Heart left ventricle (tissue), 16 donors: ENCODE measurements at regions of chr11 and their contacts with region 1.

Region 1: GRCh38 chr11:5808500-5809121 is at the start of gene OR52N2:
- DNase-seq: peak in 4 of 5 donors; percentile 63 to 70 (median 66)
- ATAC-seq: peak in 3 of 4 donors; percentile 88 to 92 (median 90)
- H3K4me3 ChIP-seq: peak within 1 kb of the TSS; percentile 17 to 66 (median 54)
- H3K27ac ChIP-seq: no peak within 1 kb of the TSS
- H3K4me1 ChIP-seq: peaks cover 0 to 12% (median 0%) of the 10 kb centered on the region in 12 donors
- H3K27me3 ChIP-seq: peaks cover 0 to 2% (median 0%) of the 10 kb centered on the region in 9 donors
- CTCF ChIP-seq: peak; percentile 66 to 89 (median 84)
- POLR2A ChIP-seq: no peak
- total RNA-seq, gene OR52N2: not detected

Region 2: GRCh38 chr11:5123802-5124521 is 684.6 kb before region 1 on chr11:
- intact Hi-C with region 1: loop called in 8 of 10 experiments (anchors 1 to 10 kb)
- DNase-seq: peak; percentile 27 to 49 (median 41)
- ATAC-seq: peak in 2 of 4 donors; percentile 71 to 76
- H3K4me3 ChIP-seq: no peak overlapping the region
- H3K27ac ChIP-seq: no peak overlapping the region
- H3K4me1 ChIP-seq: no peaks in the 10 kb centered on the region
- H3K27me3 ChIP-seq: no peaks in the 10 kb centered on the region
- CTCF ChIP-seq: peak; percentile 58 to 79 (median 73)
- POLR2A ChIP-seq: no peak

Region 3: GRCh38 chr11:5204787-5205186 is 603.8 kb before region 1 on chr11:
- intact Hi-C with region 1: loop called in 1 of 10 experiments (anchors 10 kb)
- DNase-seq: no peak
- ATAC-seq: peak in 2 of 4 donors; percentile 48 to 57
- H3K4me3 ChIP-seq: no peak overlapping the region
- H3K27ac ChIP-seq: no peak overlapping the region
- H3K4me1 ChIP-seq: no peaks in the 10 kb centered on the region
- H3K27me3 ChIP-seq: peaks cover 0 to 4% (median 0%) of the 10 kb centered on the region in 9 donors
- CTCF ChIP-seq: peak in 10 of 12 donors; percentile 20 to 51 (median 38)
- POLR2A ChIP-seq: no peak

Region 4: DNA sequence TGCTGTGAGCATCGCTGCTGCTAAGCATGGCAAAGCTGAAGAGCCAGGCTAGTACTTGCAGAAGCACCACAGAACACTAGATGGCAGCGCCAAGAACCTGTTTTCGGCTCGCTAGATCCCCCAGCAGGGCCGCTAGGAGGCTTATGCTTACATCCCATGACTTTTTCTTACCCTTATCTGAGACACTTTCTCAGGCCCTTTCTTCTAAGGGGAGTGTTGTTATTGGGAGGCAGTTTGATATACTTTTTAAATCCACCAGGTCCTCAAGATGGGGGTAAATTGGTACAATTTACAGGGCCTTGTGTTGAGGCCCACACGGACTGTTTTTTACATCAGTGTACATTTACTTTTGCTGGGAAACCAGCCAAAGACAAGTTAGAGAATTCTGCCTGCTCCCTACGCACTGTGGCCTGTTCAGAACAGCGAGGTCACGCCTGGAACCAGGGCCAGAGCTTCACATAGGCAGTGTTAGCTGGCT is 208.2 kb before region 1 on chr11:
- intact Hi-C with region 1: loop called in 8 of 10 experiments (anchors 2 to 10 kb)
- DNase-seq: peak in 4 of 5 donors; percentile 63 to 72 (median 67)
- ATAC-seq: peak in 3 of 4 donors; percentile 81 to 89 (median 84)
- H3K4me3 ChIP-seq: no peak overlapping the region
- H3K27ac ChIP-seq: peak overlapping the region in 7 of 12 donors; percentile 4 to 80 (median 20)
- H3K4me1 ChIP-seq: peaks cover 0 to 20% (median 6%) of the 10 kb centered on the region in 12 donors
- H3K27me3 ChIP-seq: no peaks in the 10 kb centered on the region
- CTCF ChIP-seq: peak; percentile 45 to 92 (median 60)
- POLR2A ChIP-seq: no peak